ENCODE measurements at regions of chr1 and their contacts with region 1.

Region 1: DNA sequence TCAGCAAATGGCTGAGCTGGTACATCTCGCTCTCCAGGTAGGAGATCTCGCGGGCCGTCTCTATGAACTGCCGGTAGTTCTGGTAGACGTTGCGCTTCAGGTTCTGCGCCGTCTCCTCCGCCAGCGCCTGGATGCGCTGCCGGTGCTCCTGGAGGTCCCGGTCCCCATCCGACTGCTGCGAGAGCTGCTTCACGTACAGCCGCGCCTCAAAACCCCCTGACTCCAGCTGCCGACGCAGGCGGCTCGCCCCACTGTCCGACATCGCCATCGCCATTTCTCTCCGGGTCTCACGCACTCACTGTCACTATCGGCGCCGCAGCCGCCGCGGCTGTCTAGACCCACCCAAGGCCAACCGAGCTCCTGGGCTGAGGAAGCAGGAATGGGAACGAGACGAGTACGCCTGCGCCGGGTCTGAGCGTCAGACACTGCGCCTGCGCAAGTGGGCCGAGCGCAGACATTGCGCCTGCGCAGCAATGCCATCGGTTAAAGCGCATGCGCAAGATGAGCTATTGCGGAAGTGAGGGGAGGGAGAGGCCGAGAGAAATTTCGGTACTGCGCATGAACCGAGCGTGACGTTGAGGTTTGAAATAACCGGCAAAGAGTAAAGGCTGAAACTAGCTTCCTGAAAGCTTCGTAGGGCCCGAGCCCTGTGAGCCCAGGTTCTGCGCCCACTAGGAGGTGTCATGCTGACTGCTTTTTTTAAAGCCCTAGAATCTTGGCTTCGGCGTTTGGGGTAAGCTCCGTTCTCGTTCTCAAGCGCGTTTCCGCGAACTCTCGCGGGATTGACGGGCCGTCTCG is at the start of gene EXOC8:
- DNase-seq: peak; percentile 95 to 100 (median 98)
- ATAC-seq: peak; percentile 86
- H3K4me3 ChIP-seq: peak within 1 kb of the TSS; percentile 99
- H3K4me3 Mint-ChIP-seq: peak within 1 kb of the TSS; percentile 97 to 100 (median 99)
- H3K27ac ChIP-seq: peak within 1 kb of the TSS; percentile 94
- H3K27ac Mint-ChIP-seq: peak within 1 kb of the TSS; percentile 96 to 100 (median 100)
- H3K4me1 ChIP-seq: peaks cover 41 to 51% of the 10 kb centered on the region in 2 donors
- H3K4me1 Mint-ChIP-seq: peaks cover 36 to 83% (median 67%) of the 10 kb centered on the region in 7 donors
- H3K27me3 ChIP-seq: no peaks in the 10 kb centered on the region
- H3K27me3 Mint-ChIP-seq: peaks cover 0 to 6% (median 0%) of the 10 kb centered on the region in 5 donors
- total RNA-seq, gene EXOC8: 21.9 to 33.8 (median 28.0) TPM

Region 2: DNA sequence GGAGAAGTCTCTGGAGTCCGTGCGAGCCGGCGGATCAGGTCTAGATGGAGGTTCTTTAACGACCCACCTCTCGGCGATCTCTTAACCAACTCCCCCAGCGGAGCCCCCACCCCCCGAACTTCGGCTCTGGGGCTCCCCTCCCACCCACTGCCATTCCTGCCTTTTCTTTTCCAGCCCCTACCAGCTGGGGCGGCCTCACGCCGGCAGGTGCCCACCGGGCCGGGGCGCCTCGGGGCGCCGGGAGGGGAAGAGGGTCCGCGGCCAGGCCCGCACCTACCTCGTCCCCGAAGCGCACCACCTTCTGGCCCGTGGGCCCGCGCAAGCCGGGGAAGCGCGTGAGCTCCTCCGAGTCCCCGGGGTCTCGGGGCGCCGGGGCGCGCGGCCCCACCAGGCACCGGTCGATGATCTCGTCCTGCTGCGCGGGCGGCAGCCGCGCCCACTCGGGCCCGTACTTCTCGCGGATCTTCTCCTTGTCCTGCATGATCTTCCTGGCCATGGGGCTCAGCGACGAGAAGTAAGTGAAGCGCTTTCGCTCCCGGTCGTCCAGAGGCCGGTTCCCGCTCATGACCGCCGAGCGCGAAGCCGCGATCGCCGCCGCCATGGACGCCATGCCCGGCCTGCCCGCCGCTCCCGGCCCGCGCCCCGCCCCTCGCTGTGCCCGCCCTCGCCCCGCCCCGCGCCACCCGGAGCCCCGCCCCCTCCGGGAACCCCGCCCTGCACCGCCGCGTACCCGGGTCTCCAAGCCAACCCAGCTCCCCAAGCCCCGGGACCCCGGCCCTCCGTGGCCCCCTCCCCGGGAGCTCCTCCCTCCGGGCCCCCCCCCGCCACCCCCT is 469.6 kb before region 1 on chr1 and contains the start of gene C1orf198:
- CTCF ChIA-PET with region 1: no interaction called
- POLR2A ChIA-PET with region 1: interaction called, 5 read pairs
- intact Hi-C with region 1: loop called (anchors 5 to 10 kb)
- DNase-seq: peak; percentile 48 to 84 (median 69)
- ATAC-seq: peak; percentile 97
- H3K4me3 ChIP-seq: peak within 1 kb of the TSS; percentile 76
- H3K4me3 Mint-ChIP-seq: peak within 1 kb of the TSS; percentile 70 to 94 (median 88)
- H3K27ac ChIP-seq: peak within 1 kb of the TSS; percentile 67
- H3K27ac Mint-ChIP-seq: peak within 1 kb of the TSS in 8 of 9 donors; percentile 29 to 84 (median 62)
- H3K4me1 ChIP-seq: peaks cover 0 to 5% of the 10 kb centered on the region in 2 donors
- H3K4me1 Mint-ChIP-seq: peaks cover 10 to 33% (median 24%) of the 10 kb centered on the region in 7 donors
- H3K27me3 ChIP-seq: peaks cover 0 to 7% of the 10 kb centered on the region in 2 donors
- H3K27me3 Mint-ChIP-seq: peaks cover 13 to 38% (median 25%) of the 10 kb centered on the region in 5 donors
- total RNA-seq, gene C1orf198: 2.9 to 6.0 (median 3.7) TPM

Region 3: GRCh38 chr1:231040019-231040799 is 297.5 kb before region 1 on chr1 and contains the start of gene FAM89A:
- CTCF ChIA-PET with region 1: no interaction called
- POLR2A ChIA-PET with region 1: interaction called, 3 read pairs
- intact Hi-C with region 1: loop called (anchors 5 to 10 kb)
- DNase-seq: peak; percentile 44 to 79 (median 70)
- ATAC-seq: peak; percentile 91
- H3K4me3 ChIP-seq: peak within 1 kb of the TSS; percentile 67
- H3K4me3 Mint-ChIP-seq: peak within 1 kb of the TSS; percentile 81 to 90 (median 82)
- H3K27ac ChIP-seq: peak within 1 kb of the TSS; percentile 63
- H3K27ac Mint-ChIP-seq: peak within 1 kb of the TSS in 8 of 9 donors; percentile 36 to 83 (median 69)
- H3K4me1 ChIP-seq: peaks cover 10 to 13% of the 10 kb centered on the region in 2 donors
- H3K4me1 Mint-ChIP-seq: peaks cover 27 to 49% (median 36%) of the 10 kb centered on the region in 7 donors
- H3K27me3 ChIP-seq: no peaks in the 10 kb centered on the region
- H3K27me3 Mint-ChIP-seq: peaks cover 0 to 37% (median 0%) of the 10 kb centered on the region in 5 donors
- total RNA-seq, gene FAM89A: 4.5 to 9.0 (median 6.9) TPM

Region 4: GRCh38 chr1:231240883-231241735 is 96.6 kb before region 1 on chr1 and contains the start of gene GNPAT:
- CTCF ChIA-PET with region 1: interaction called, 3 read pairs
- POLR2A ChIA-PET with region 1: interaction called, 7 read pairs
- intact Hi-C with region 1: loop called (anchors 1 kb)
- DNase-seq: peak; percentile 86 to 97 (median 92)
- ATAC-seq: peak; percentile 98
- H3K4me3 ChIP-seq: peak within 1 kb of the TSS; percentile 98
- H3K4me3 Mint-ChIP-seq: peak within 1 kb of the TSS; percentile 90 to 99 (median 95)
- H3K27ac ChIP-seq: peak within 1 kb of the TSS; percentile 93
- H3K27ac Mint-ChIP-seq: peak within 1 kb of the TSS; percentile 92 to 99 (median 97)
- H3K4me1 ChIP-seq: peaks cover 17 to 44% of the 10 kb centered on the region in 2 donors
- H3K4me1 Mint-ChIP-seq: peaks cover 47 to 86% (median 76%) of the 10 kb centered on the region in 7 donors
- H3K27me3 ChIP-seq: no peaks in the 10 kb centered on the region
- H3K27me3 Mint-ChIP-seq: no peaks in the 10 kb centered on the region
- total RNA-seq, gene GNPAT: 17.3 to 41.0 (median 35.5) TPM

Region 5: GRCh38 chr1:231272880-231273279 is 64.8 kb before region 1 on chr1:
- CTCF ChIA-PET with region 1: no interaction called
- POLR2A ChIA-PET with region 1: no interaction called
- intact Hi-C with region 1: loop called in 1 of 2 experiments (anchors 1 kb)
- DNase-seq: peak in 1 of 9 donors; percentile 33
- ATAC-seq: no peak
- H3K4me3 ChIP-seq: no peak overlapping the region
- H3K4me3 Mint-ChIP-seq: peak overlapping the region in 7 of 10 donors; percentile 28 to 81 (median 60)
- H3K27ac ChIP-seq: no peak overlapping the region
- H3K27ac Mint-ChIP-seq: peak overlapping the region; percentile 28 to 99 (median 93)
- H3K4me1 ChIP-seq: peaks cover 0 to 3% of the 10 kb centered on the region in 2 donors
- H3K4me1 Mint-ChIP-seq: peaks cover 6 to 52% (median 24%) of the 10 kb centered on the region in 7 donors
- H3K27me3 ChIP-seq: no peaks in the 10 kb centered on the region
- H3K27me3 Mint-ChIP-seq: no peaks in the 10 kb centered on the region

Region 6: GRCh38 chr1:231295938-231296337 is 41.7 kb before region 1 on chr1:
- CTCF ChIA-PET with region 1: no interaction called
- POLR2A ChIA-PET with region 1: no interaction called
- intact Hi-C with region 1: no loop called
- DNase-seq: no peak
- ATAC-seq: no peak
- H3K4me3 ChIP-seq: no peak overlapping the region
- H3K4me3 Mint-ChIP-seq: no peak overlapping the region
- H3K27ac ChIP-seq: no peak overlapping the region
- H3K27ac Mint-ChIP-seq: no peak overlapping the region
- H3K4me1 ChIP-seq: no peaks in the 10 kb centered on the region
- H3K4me1 Mint-ChIP-seq: peaks cover 0 to 1% (median 0%) of the 10 kb centered on the region in 7 donors
- H3K27me3 ChIP-seq: no peaks in the 10 kb centered on the region
- H3K27me3 Mint-ChIP-seq: no peaks in the 10 kb centered on the region

Region 7: DNA sequence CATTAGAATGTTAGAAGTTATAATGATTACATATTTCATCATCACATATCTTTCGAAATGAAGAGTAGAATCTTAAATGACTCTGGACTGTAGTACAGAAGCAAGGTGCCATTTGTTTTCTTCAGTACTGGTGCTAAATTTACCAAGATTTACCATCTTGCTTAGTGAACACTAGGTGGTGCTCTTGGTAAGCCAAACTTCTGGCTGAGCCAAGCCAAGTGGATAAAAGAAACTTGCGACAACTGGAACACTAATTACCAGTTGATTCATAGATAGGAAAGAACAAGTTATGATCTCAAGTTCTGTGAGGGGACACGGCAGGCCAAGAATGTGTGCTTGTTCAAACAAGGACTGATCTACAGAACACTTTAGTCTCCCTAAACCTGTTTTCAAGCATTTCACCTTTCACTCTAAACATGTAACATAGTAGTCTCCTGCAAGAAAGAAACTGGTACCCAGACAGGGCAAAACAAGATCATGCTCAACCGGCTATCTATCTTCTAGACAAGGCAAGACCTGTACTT is 20.2 kb after region 1 on chr1:
- CTCF ChIA-PET with region 1: no interaction called
- POLR2A ChIA-PET with region 1: interaction called, 3 read pairs
- intact Hi-C with region 1: loop called in 1 of 2 experiments (anchors 2 kb)
- DNase-seq: peak in 7 of 9 donors; percentile 36 to 64 (median 55)
- ATAC-seq: peak; percentile 91
- H3K4me3 ChIP-seq: no peak overlapping the region
- H3K4me3 Mint-ChIP-seq: no peak overlapping the region
- H3K27ac ChIP-seq: no peak overlapping the region
- H3K27ac Mint-ChIP-seq: peak overlapping the region in 7 of 9 donors; percentile 3 to 63 (median 27)
- H3K4me1 ChIP-seq: peaks cover 0 to 3% of the 10 kb centered on the region in 2 donors
- H3K4me1 Mint-ChIP-seq: peaks cover 2 to 15% (median 7%) of the 10 kb centered on the region in 7 donors
- H3K27me3 ChIP-seq: no peaks in the 10 kb centered on the region
- H3K27me3 Mint-ChIP-seq: no peaks in the 10 kb centered on the region

Region 8: GRCh38 chr1:231626535-231626945 is 288.9 kb after region 1 on chr1 and contains the start of gene DISC1:
- CTCF ChIA-PET with region 1: no interaction called
- POLR2A ChIA-PET with region 1: interaction called, 3 read pairs
- intact Hi-C with region 1: loop called in 1 of 2 experiments (anchors 1 kb)
- DNase-seq: peak; percentile 49 to 74 (median 70)
- ATAC-seq: peak; percentile 88
- H3K4me3 ChIP-seq: peak within 1 kb of the TSS; percentile 74
- H3K4me3 Mint-ChIP-seq: peak within 1 kb of the TSS; percentile 88 to 98 (median 94)
- H3K27ac ChIP-seq: peak within 1 kb of the TSS; percentile 60
- H3K27ac Mint-ChIP-seq: peak within 1 kb of the TSS; percentile 77 to 97 (median 92)
- H3K4me1 ChIP-seq: peaks cover 8 to 16% of the 10 kb centered on the region in 2 donors
- H3K4me1 Mint-ChIP-seq: peaks cover 17 to 52% (median 38%) of the 10 kb centered on the region in 7 donors
- H3K27me3 ChIP-seq: no peaks in the 10 kb centered on the region
- H3K27me3 Mint-ChIP-seq: peaks cover 0 to 36% (median 0%) of the 10 kb centered on the region in 5 donors
- total RNA-seq, gene DISC1: 17.1 to 33.8 (median 23.5) TPM

Measured in naive thymus-derived CD4-positive, alpha-beta T cell (primary cell).